ENCODE measurements at regions of chr21 and their contacts with region 1.

Region 1: DNA sequence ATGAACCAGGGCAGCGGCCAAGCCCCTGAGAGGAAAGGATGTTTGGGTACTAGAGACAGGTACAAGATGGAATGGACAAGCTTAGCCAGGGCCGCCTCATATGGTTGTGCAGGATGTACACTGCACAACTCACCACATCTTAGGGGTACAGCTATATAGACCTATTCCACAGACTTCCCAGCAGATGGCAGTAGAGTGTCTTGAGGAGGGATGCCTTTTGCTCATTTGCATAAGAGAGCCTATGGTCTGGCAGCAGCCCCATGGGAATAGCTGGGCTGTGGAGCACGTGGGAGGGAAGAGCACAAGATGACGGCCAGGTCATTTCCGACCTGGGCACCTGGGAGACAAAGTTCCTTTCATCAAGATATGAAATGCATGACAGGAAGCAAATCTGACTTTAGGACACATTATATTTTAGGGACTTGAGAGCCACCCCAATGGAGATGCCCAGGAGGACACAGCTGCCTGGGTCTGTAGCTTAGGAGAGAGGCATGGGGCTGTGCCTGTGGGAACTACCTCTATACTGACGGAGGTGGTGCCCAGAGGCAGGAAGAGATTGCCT is 215.5 kb downstream of the KCNJ6 start:
- DNase-seq: peak; percentile 83
- ATAC-seq: peak; percentile 99
- H3K4me3 ChIP-seq: no peak overlapping the region
- H3K27ac ChIP-seq: no peak overlapping the region
- H3K4me1 ChIP-seq: no peaks in the 10 kb centered on the region
- H3K27me3 ChIP-seq: peaks cover 25% of the 10 kb centered on the region
- CTCF ChIP-seq: peak; percentile 88

Region 2: GRCh38 chr21:37642493-37642892 is 58.2 kb before region 1 on chr21:
- CTCF ChIA-PET with region 1: no interaction called
- POLR2A ChIA-PET with region 1: no interaction called
- intact Hi-C with region 1: no loop called
- DNase-seq: peak; percentile 68
- ATAC-seq: peak; percentile 47
- H3K4me3 ChIP-seq: no peak overlapping the region
- H3K27ac ChIP-seq: no peak overlapping the region
- H3K4me1 ChIP-seq: peaks cover 13% of the 10 kb centered on the region
- H3K27me3 ChIP-seq: no peaks in the 10 kb centered on the region
- CTCF ChIP-seq: peak; percentile 66; the same call in 1 of the 2 replicates

Region 3: GRCh38 chr21:38234395-38235151 is 533.9 kb after region 1 on chr21:
- CTCF ChIA-PET with region 1: interaction called, 11 read pairs
- POLR2A ChIA-PET with region 1: no interaction called
- intact Hi-C with region 1: no loop called
- DNase-seq: peak; percentile 95
- ATAC-seq: peak; percentile 79
- H3K4me3 ChIP-seq: peak overlapping the region; percentile 46
- H3K27ac ChIP-seq: peak overlapping the region; percentile 85
- H3K4me1 ChIP-seq: peaks cover 21% of the 10 kb centered on the region
- H3K27me3 ChIP-seq: no peaks in the 10 kb centered on the region
- CTCF ChIP-seq: no peak

Measured in PC-3 (cell line).